Panc1 (cell line): ENCODE measurements at regions of chr11 and their contacts with region 1.

Region 1: GRCh38 chr11:14643697-14644225 is at the start of gene PDE3B:
- DNase-seq: no peak
- ATAC-seq: peak; percentile 96
- H3K4me3 ChIP-seq: peak within 1 kb of the TSS; percentile 76 to 91
- H3K27ac ChIP-seq: peak within 1 kb of the TSS; percentile 85
- H3K4me1 ChIP-seq: peaks cover 23% of the 10 kb centered on the region
- H3K27me3 ChIP-seq: no peaks in the 10 kb centered on the region
- CTCF ChIP-seq: peak; percentile 42
- total RNA-seq, gene PDE3B: 33.0 TPM

Region 2: GRCh38 chr11:14519917-14520746 is 123.6 kb before region 1 on chr11 and contains the start of gene PSMA1:
- CTCF ChIA-PET with region 1: no interaction called
- POLR2A ChIA-PET with region 1: no interaction called
- in situ Hi-C with region 1: no loop called
- intact Hi-C with region 1: loop called (anchors 5 kb)
- DNase-seq: peak; percentile 79
- ATAC-seq: peak; percentile 98
- H3K4me3 ChIP-seq: peak within 1 kb of the TSS; percentile 91 to 92
- H3K27ac ChIP-seq: peak within 1 kb of the TSS; percentile 99
- H3K4me1 ChIP-seq: peaks cover 11% of the 10 kb centered on the region; the same call in 1 of the 2 replicates
- H3K27me3 ChIP-seq: no peaks in the 10 kb centered on the region
- CTCF ChIP-seq: no peak
- total RNA-seq, gene PSMA1: 198 TPM

Region 3: GRCh38 chr11:14625586-14626205 is 18.1 kb before region 1 on chr11:
- CTCF ChIA-PET with region 1: no interaction called
- POLR2A ChIA-PET with region 1: no interaction called
- in situ Hi-C with region 1: no loop called
- intact Hi-C with region 1: no loop called
- DNase-seq: no peak
- ATAC-seq: no peak
- H3K4me3 ChIP-seq: no peak overlapping the region
- H3K27ac ChIP-seq: no peak overlapping the region
- H3K4me1 ChIP-seq: no peaks in the 10 kb centered on the region
- H3K27me3 ChIP-seq: no peaks in the 10 kb centered on the region
- CTCF ChIP-seq: no peak

Region 4: DNA sequence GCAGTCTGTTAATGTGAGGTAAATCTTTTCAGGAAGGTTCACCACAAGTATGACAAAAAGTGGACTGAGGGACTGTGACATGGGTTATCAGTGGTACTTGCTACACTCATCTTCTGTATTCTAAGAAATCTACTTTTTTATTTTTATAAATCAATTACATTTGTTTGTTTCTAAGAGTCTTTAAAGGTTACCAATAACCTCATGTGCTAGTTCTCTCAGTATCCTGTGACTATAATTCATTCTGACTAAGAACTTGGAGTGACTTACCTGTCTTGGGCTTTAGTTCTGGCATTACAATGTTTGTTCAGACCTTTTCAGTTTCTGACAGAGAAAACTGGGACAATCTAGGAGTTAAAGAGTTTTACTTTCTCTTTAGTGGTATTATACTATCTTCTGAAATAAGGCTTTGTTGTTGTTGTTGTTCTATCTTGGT is 108.2 kb after region 1 on chr11:
- CTCF ChIA-PET with region 1: no interaction called
- POLR2A ChIA-PET with region 1: interaction called, 6 read pairs
- in situ Hi-C with region 1: no loop called
- intact Hi-C with region 1: loop called (anchors 10 kb)
- DNase-seq: no peak
- ATAC-seq: no peak
- H3K4me3 ChIP-seq: no peak overlapping the region
- H3K27ac ChIP-seq: no peak overlapping the region
- H3K4me1 ChIP-seq: peaks cover 6% of the 10 kb centered on the region
- H3K27me3 ChIP-seq: no peaks in the 10 kb centered on the region
- CTCF ChIP-seq: no peak

Region 5: DNA sequence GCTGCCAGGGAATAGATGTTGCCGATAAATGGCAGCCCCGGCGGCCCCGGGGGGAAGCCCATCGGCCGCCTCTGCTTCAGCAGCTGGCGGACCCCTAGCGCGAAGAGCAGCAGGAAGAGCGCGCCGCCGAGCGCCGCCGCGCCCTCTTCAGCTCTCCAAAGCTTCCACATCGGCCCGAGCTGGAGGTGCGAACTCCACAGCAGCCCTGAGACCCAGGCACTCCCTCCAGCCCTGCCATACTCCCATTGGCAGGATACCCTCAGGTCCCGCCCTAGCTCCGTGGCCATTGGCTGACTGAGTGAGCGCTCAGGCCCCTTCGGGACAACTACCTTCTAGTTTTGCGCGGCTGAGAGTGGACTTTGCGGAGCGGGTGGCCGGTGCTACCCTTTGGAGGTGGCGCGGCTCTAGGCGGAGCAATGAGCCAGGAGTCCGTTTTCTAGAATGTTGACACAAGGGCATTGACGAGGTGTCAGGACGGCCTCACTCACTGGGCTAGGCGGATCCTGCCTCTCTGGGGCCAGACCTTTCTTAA is 248.3 kb after region 1 on chr11 and contains the start of gene CYP2R1:
- CTCF ChIA-PET with region 1: no interaction called
- POLR2A ChIA-PET with region 1: no interaction called
- in situ Hi-C with region 1: no loop called
- intact Hi-C with region 1: loop called (anchors 10 kb)
- DNase-seq: peak; percentile 96
- ATAC-seq: peak; percentile 99
- H3K4me3 ChIP-seq: peak within 1 kb of the TSS; percentile 68 to 89
- H3K27ac ChIP-seq: peak within 1 kb of the TSS; percentile 92
- H3K4me1 ChIP-seq: peaks cover 5% of the 10 kb centered on the region
- H3K27me3 ChIP-seq: no peaks in the 10 kb centered on the region
- CTCF ChIP-seq: no peak; the same call in 1 of the 2 replicates
- total RNA-seq, gene CYP2R1: 11.2 TPM